HEK293 (cell line): ENCODE measurements at regions of chr1 and their contacts with region 1.

Region 1: GRCh38 chr1:204806943-204807687 is 63.5 kb upstream of the NFASC start:
- H3K4me3 ChIP-seq: peak overlapping the region; percentile 62
- H3K27ac ChIP-seq: no peak overlapping the region
- H3K4me1 ChIP-seq: no peaks in the 10 kb centered on the region
- CTCF ChIP-seq: peak; percentile 99

Region 2: GRCh38 chr1:204516180-204516879 is 290.8 kb before region 1 on chr1 and contains the start of gene MDM4:
- CTCF ChIA-PET with region 1: interaction called, 15 read pairs
- POLR2A ChIA-PET with region 1: interaction called, 3 read pairs
- H3K4me3 ChIP-seq: peak within 1 kb of the TSS; percentile 99
- H3K27ac ChIP-seq: peak within 1 kb of the TSS; percentile 85
- H3K4me1 ChIP-seq: no peaks in the 10 kb centered on the region
- CTCF ChIP-seq: peak; percentile 66

Region 3: DNA sequence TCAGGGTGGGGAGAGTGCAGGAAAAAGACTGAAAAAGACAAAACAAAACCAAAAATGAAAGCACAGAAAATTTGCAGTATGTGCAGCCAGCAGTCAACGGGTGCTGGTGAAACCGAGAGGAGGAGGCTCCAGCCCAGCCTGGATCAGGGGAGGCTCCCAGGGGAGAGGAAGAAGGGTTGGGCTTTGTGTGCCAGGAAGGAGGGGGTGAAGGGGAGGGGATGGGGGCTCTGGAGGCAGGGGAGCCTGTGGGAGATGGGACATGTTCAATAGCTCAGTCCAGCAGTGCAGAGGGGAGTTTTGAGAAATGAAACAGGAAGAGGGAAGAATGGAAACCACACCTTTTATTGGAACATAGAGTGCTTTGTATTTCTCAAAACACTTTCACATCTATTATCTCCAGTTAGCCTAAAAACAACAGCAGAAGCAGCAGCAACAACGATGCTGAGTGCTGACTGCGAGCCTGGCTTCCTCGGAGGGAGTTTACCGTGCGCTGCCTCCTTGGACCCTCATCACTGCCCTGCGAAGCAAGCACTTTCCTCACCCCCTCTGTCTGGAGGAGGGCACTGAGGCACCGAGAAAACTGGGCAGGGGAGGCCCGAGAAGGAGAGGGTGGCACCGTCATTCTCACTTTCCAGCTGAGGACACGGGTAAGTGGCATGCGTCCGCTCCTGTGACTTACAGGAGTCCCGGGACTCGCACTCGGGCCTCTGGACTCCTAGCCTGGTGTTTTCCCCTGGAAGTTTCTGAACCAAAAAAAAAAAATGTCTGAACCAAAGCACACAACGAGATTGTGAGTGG is 228.0 kb before region 1 on chr1:
- CTCF ChIA-PET with region 1: interaction called, 401 read pairs
- POLR2A ChIA-PET with region 1: no interaction called
- H3K4me3 ChIP-seq: no peak overlapping the region
- H3K27ac ChIP-seq: no peak overlapping the region
- H3K4me1 ChIP-seq: no peaks in the 10 kb centered on the region
- CTCF ChIP-seq: no peak

Region 4: DNA sequence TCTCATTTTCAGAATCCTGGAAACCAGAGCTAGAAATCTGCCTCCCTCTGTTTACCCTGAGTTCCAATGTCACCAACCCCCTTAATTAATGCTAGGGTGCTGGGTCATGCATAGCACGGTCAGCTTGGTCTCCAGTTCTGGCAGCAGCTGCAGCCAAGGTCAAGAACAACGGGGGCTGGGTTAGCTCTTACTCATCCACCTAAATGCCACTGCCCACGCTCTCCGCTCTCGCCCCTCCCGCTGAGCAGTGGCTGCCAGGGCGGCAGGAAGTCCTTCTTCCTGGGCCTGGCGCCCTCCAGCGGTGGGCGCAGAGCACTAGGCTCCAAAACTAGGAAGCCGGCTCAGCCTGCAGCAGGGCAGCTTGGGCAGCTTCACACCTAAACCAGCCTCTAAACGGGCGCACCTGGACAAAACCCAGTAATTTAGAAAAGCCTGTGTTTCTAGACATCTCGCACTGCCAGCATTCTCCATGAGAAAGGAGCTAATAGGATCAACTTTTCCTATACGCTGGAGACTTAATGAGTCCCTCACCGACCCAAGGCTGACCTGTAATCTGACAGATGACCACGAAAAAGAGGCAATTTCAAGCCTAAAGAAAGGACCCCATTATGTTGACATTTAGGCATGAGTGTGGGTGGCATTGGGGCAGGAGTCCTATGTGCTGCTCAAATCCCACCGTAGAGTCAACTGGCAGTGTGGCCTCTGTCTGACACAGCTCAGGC is 43.2 kb before region 1 on chr1:
- CTCF ChIA-PET with region 1: interaction called, 36 read pairs
- POLR2A ChIA-PET with region 1: no interaction called
- H3K4me3 ChIP-seq: no peak overlapping the region
- H3K27ac ChIP-seq: no peak overlapping the region
- H3K4me1 ChIP-seq: no peaks in the 10 kb centered on the region
- CTCF ChIP-seq: peak; percentile 78

Region 5: GRCh38 chr1:204842892-204843291 is 35.8 kb after region 1 on chr1:
- CTCF ChIA-PET with region 1: interaction called, 15 read pairs
- POLR2A ChIA-PET with region 1: no interaction called
- H3K4me3 ChIP-seq: no peak overlapping the region
- H3K27ac ChIP-seq: no peak overlapping the region
- H3K4me1 ChIP-seq: 0 out of 2 replicates have a peak, but pooled peaks cover 2% of the 10 kb centered on the region
- CTCF ChIP-seq: no peak

Region 6: GRCh38 chr1:204941421-204942338 is 134.6 kb after region 1 on chr1:
- CTCF ChIA-PET with region 1: interaction called, 179 read pairs
- POLR2A ChIA-PET with region 1: no interaction called
- H3K4me3 ChIP-seq: no peak overlapping the region
- H3K27ac ChIP-seq: no peak overlapping the region
- H3K4me1 ChIP-seq: no peaks in the 10 kb centered on the region
- CTCF ChIP-seq: peak; percentile 80